Kidney (tissue), 22 donors: ENCODE measurements at regions of chr15 and their contacts with region 1.

Region 1: GRCh38 chr15:66789029-66790025 is 87.3 kb downstream of the SMAD6 start:
- DNase-seq: peak in 4 of 5 donors; percentile 50 to 84 (median 73)
- H3K4me3 ChIP-seq: no peak overlapping the region
- H3K27ac ChIP-seq: no peak overlapping the region
- H3K4me1 ChIP-seq: peaks cover 0 to 3% (median 2%) of the 10 kb centered on the region in 3 donors
- H3K27me3 ChIP-seq: no peaks in the 10 kb centered on the region
- CTCF ChIP-seq: peak; percentile 38

Region 2: GRCh38 chr15:66039117-66039871 is 750.0 kb before region 1 on chr15:
- intact Hi-C with region 1: no loop called
- DNase-seq: peak in 2 of 5 donors; percentile 14 to 29
- H3K4me3 ChIP-seq: no peak overlapping the region
- H3K27ac ChIP-seq: no peak overlapping the region
- H3K4me1 ChIP-seq: no peaks in the 10 kb centered on the region
- H3K27me3 ChIP-seq: no peaks in the 10 kb centered on the region
- CTCF ChIP-seq: no peak

Region 3: DNA sequence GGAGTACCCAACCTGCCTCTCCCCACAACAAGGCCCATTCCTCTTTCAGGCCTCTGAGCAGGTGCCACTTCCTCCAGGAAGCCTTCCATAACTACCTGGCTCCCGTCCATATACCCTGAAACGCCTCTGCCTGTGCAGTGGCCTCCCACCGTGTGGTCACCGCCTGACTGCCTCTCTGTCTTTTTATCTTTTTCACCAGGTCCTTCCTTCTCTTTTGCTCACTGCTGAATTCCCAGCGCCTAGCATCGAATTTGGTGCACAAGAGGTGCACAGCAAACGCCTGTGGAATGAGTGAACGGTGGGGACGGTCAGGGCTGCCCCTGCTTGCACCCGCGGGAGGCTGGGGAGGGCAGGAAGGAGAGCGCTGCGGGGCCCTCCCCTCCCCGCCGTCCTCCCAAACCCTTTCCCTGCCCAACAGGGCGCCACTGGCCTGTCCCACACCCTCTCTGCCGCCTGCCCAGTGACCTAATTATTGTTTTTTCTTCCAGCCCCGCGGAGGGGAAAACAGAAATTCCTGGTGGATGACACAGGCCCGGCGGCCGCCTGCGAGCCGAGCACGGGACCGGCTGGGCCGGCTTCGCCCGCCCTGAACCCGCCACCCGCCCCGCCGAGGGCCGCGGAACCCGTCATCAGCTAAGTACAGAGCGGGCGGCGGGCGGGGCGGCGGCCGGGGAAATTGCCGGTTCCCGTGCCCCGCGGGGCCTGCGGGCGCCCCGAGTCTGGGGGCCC is 52.8 kb after region 1 on chr15:
- intact Hi-C with region 1: loop called (anchors 10 kb)
- DNase-seq: peak; percentile 86 to 97 (median 87)
- H3K4me3 ChIP-seq: peak overlapping the region in 2 of 3 donors; percentile 43 to 49
- H3K27ac ChIP-seq: peak overlapping the region; percentile 93 to 96
- H3K4me1 ChIP-seq: peaks cover 10 to 19% (median 15%) of the 10 kb centered on the region in 3 donors
- H3K27me3 ChIP-seq: no peaks in the 10 kb centered on the region
- CTCF ChIP-seq: no peak

Region 4: GRCh38 chr15:67188551-67189218 is 399.4 kb after region 1 on chr15:
- intact Hi-C with region 1: no loop called
- DNase-seq: peak in 3 of 5 donors; percentile 20 to 81 (median 33)
- H3K4me3 ChIP-seq: no peak overlapping the region
- H3K27ac ChIP-seq: no peak overlapping the region
- H3K4me1 ChIP-seq: peaks cover 0 to 12% (median 10%) of the 10 kb centered on the region in 3 donors
- H3K27me3 ChIP-seq: no peaks in the 10 kb centered on the region
- CTCF ChIP-seq: no peak